ENCODE measurements at regions of chr4 and their contacts with region 1.

Region 1: DNA sequence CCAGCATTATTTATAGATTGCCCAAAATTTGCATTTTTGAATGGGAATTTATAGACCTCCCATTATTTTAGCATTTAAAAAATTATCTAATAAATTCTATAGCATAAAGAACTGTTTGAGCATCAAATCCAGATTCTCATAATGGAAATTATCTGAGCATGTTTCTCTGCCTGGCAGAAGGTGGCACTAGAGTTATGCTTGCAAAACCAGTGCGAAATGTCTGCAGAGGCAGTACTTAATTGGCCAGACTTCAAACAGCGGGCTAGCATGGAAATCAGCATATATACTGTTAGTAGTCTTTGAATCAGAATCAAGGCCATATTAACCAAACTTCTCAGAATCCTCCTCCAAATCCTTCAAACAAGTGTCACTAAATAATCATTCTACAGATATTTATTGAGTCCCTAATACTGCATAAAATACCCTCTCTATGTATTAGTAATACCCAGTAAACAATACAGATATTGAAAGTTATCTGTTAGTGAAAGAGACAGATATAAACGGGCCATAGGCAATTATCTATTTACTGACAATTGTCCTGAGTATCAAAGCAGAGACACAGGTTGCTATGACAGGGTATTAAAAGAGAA is 78.7 kb upstream of the DCLK2 start:
- DNase-seq: peak in 6 of 10 donors; percentile 8 to 88 (median 24)

Region 2: GRCh38 chr4:150078637-150079581 is 79.3 kb after region 1 on chr4:
- intact Hi-C with region 1: loop called (anchors 10 kb)
- DNase-seq: peak in 9 of 10 donors; percentile 18 to 88 (median 45)

Region 3: DNA sequence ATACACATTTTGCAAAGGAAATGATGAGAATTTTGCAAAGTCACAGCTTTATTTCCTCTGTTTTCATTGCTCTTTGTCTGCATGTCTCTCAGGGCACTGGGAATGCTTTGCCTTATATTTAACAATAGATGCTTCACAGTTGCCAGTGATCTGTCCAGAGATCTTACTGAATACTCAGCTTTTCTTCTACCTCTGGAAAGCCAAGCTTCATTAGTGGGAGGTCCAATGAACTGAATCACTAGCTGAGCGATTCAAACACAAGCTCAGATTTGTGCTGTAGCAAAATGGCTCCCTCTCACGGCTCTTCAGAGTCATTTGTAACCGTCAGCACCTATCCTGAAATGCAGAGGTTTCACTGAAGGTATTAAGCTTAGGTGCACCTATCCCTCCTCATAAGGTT is 217.6 kb after region 1 on chr4:
- intact Hi-C with region 1: loop called (anchors 1 kb)
- DNase-seq: peak in 2 of 10 donors; percentile 27 to 36

Region 4: GRCh38 chr4:150244600-150244999 is 245.0 kb after region 1 on chr4:
- intact Hi-C with region 1: loop called (anchors 1 kb)
- DNase-seq: no peak

Region 5: GRCh38 chr4:150867148-150867547 is 867.6 kb after region 1 on chr4:
- intact Hi-C with region 1: loop called (anchors 5 kb)
- DNase-seq: no peak